ENCODE measurements at regions of chrX and their contacts with region 1.

Region 1: DNA sequence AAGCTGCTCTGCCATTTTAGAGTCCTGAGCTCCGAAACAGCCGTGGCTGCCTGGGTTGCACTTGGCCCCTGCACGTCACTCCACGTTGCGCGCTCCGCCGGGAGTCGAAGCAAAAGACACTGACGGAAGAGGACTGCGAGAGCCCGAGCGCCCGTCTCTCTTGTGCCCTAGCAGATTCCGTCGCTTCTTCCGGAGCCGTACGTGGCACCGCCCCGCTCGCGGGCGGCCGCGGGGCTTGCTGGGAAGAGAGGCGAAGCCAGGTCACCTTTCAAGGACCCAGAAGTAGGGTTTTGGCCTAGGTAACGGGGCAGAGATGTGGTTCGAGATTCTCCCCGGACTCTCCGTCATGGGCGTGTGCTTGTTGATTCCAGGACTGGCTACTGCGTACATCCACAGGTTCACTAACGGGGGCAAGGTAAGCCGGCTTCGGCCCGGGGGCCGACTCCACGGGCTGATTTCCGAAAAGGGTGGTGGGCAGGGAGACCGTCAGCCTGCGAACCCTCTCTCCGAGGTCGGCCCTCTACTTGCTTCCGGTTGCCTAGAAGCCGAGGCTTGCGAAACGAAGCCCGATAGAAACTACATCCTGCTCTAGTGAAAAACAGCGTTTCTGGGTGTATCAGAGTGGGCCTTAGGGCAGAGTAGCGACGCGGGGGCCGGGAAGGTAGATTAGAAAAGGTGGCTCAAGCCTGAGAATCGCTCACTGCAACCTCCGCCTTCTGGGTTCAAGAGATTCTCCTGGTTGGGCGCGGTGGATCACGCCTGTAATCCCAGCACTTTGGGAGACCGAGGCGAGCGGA is at the starts of genes NDUFA1 and RNF113A:
- DNase-seq: peak; percentile 77
- H3K4me3 ChIP-seq: peak within 1 kb of the TSS; percentile 50 to 54
- H3K27ac ChIP-seq: peak within 1 kb of the TSS; percentile 83 to 89
- H3K4me1 ChIP-seq: no peaks in the 10 kb centered on the region
- H3K27me3 ChIP-seq: no peaks in the 10 kb centered on the region
- CTCF ChIP-seq: no peak
- POLR2A ChIP-seq: peak; percentile 53
- total RNA-seq, gene NDUFA1: 54.6 to 96.5 TPM
- total RNA-seq, gene RNF113A: 10.5 to 13.2 TPM

Region 2: DNA sequence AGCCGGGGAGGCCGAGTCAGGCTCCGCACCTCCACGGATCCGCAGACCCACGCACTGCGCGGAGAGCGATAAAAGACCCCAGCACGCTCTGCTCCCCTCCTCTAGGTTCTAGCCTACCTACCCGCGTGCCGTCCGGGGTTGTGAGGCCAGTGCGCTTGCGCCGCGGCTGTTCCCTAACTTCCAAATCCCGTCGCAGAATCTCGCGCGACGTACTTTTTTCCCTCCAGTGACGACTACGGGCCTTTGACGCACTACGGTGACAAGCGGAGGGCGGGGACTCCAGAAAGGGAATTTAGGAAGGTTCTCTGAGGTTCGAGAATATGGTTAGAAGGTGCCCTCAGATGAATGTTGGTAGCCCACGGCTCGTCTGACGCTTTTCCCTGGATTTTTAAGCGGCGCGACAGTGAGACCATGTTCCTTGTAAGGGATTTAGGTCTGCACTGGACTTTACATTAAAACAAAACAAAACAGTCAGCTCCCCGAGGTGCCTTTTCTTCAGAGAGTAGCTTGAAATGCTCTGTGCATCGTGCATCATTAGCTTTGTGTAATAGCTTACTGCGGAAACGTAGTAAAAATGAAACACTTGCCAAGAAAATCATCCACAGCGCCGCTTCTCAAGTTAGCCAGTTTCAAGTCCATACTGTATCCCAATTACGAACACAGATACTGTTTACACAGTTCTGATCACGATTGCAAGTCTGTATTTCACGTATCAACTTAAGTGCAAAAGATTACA is 265.3 kb before region 1 on chrX and contains the start of gene NKRF:
- intact Hi-C with region 1: loop called (anchors 10 kb)
- DNase-seq: peak; percentile 87
- H3K4me3 ChIP-seq: peak within 1 kb of the TSS; percentile 55 to 56
- H3K27ac ChIP-seq: peak within 1 kb of the TSS; percentile 91
- H3K4me1 ChIP-seq: no peaks in the 10 kb centered on the region
- H3K27me3 ChIP-seq: no peaks in the 10 kb centered on the region
- CTCF ChIP-seq: no peak
- POLR2A ChIP-seq: peak; percentile 89
- total RNA-seq, gene NKRF: 6.6 to 6.9 TPM

Region 3: DNA sequence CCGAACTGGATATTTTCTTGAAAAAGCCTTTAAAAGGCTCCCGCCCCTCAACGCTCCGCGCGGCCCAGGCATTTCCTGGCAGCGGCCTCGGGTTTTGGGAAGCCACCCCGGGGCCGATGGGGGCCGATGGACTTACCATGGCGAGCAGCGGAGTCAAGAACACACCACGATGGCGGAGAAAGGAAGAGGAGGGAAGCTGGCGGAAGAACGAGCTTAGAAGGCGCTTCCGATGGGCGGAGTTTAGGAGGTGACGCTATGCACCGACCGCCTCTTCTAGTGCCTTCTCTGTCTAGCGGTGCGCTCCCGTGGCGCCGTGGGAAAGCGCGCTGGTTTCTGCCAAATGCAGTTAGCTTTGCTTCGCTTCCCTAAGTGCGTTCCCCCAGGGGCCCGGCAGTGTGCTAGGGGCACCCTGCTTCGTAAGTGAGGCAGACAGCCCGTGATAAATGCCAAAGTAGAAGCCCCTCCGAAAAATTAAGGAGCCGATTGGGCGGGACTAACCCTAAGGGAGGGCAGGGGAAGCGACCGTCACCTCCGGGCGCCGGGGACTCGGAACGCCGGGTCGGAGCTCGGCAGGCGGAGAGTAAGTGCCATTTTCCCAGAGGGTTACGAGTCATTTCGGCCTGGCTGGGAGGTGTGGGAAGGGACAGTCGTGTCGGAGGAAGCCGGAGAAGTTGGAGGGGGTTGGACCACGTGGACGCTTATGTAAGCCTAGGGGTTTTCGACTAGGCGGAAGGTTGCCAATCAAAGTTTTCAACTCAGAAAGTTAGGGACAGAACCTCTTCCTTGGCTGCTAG is 80.2 kb before region 1 on chrX and contains the start of gene RPL39:
- intact Hi-C with region 1: loop called (anchors 5 kb)
- DNase-seq: peak; percentile 80
- H3K4me3 ChIP-seq: peak within 1 kb of the TSS; percentile 45 to 57
- H3K27ac ChIP-seq: peak within 1 kb of the TSS; percentile 93 to 94
- H3K4me1 ChIP-seq: no peaks in the 10 kb centered on the region
- H3K27me3 ChIP-seq: no peaks in the 10 kb centered on the region
- CTCF ChIP-seq: no peak
- POLR2A ChIP-seq: peak; percentile 62
- total RNA-seq, gene RPL39: 2,133 to 2,412 TPM

Measured in prostate gland (tissue), 2 donors.